Panc1 (cell line): ENCODE measurements at regions of chr6 and their contacts with region 1.

Region 1: DNA sequence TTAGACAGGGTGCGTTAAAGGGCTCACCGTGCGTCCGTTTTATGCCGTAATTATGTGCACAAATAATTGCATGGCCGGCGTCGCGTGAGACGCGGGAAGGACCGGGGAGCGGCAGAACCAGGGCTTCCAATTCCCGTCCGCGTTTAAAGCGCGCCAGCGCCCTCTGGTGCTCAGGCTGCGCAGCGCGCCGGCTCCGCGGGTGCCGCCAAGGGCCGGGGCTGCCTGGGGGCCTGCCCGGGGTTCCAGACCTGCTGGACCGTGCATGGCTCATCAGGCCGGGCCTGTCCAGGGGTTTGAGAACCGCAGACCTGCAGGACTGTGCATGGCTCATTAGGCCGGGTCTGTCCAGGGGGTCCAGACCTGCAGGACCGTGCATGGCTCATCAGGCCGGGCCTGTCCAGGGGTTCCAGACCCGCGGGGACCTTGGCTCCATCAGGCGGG is 369.0 kb downstream of the THBS2 start:
- DNase-seq: no peak
- ATAC-seq: peak; percentile 94
- H3K4me3 ChIP-seq: no peak overlapping the region
- H3K27ac ChIP-seq: no peak overlapping the region
- H3K4me1 ChIP-seq: no peaks in the 10 kb centered on the region
- H3K27me3 ChIP-seq: peaks cover 28% of the 10 kb centered on the region
- CTCF ChIP-seq: peak; percentile 99

Region 2: DNA sequence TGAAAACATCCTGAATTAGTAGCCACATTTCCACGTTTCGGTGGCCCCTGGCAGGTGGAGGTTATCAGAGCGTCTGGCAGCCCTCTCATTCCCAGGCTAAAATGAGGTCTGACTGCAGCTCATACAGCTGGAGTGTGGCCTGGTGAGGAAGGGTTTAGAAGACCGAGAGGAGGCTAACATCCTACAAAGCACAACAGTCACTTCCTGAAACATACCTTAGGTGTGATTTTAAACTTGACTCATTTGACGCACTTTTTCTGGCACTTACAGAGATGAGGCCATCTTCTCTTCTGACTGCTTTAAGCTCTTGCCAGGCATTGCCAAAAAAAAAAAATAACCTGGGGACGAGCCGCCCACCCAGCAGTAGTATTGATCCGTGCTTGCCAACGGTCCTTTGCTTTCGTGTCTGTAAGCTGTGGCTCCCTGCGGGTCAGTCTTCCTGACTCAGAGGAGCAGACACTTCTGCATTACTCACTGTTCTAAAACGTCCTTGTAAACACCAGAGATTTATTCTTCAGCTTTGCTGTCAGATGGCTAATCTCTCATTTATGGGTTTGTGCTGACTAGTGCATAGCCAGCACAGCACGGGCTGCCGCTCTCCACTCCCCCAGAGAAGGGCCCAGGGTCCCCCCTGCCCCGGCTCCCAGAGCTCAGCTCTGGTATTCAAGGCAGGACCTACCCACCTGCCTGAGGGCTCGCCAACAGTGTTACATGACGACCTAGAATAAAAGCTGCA is 727.2 kb before region 1 on chr6:
- CTCF ChIA-PET with region 1: no interaction called
- POLR2A ChIA-PET with region 1: no interaction called
- in situ Hi-C with region 1: no loop called
- intact Hi-C with region 1: loop called (anchors 10 kb)
- DNase-seq: peak; percentile 68
- ATAC-seq: peak; percentile 87
- H3K4me3 ChIP-seq: peak overlapping the region in 1 of 2 experiments; percentile 54; a peak in 2 of 4 replicates
- H3K27ac ChIP-seq: peak overlapping the region; percentile 85
- H3K4me1 ChIP-seq: peaks cover 33% of the 10 kb centered on the region
- H3K27me3 ChIP-seq: no peaks in the 10 kb centered on the region
- CTCF ChIP-seq: no peak

Region 3: GRCh38 chr6:168370310-168370991 is 514.2 kb before region 1 on chr6:
- CTCF ChIA-PET with region 1: no interaction called
- POLR2A ChIA-PET with region 1: no interaction called
- in situ Hi-C with region 1: no loop called
- intact Hi-C with region 1: loop called (anchors 1 kb)
- DNase-seq: peak; percentile 24
- ATAC-seq: peak; percentile 98
- H3K4me3 ChIP-seq: no peak overlapping the region
- H3K27ac ChIP-seq: no peak overlapping the region
- H3K4me1 ChIP-seq: peaks cover 6% of the 10 kb centered on the region; the same call in 1 of the 2 replicates
- H3K27me3 ChIP-seq: no peaks in the 10 kb centered on the region; the same call in 1 of the 2 replicates
- CTCF ChIP-seq: peak; percentile 99

Region 4: GRCh38 chr6:168451805-168452517 is 432.7 kb before region 1 on chr6:
- CTCF ChIA-PET with region 1: no interaction called
- POLR2A ChIA-PET with region 1: no interaction called
- in situ Hi-C with region 1: no loop called
- intact Hi-C with region 1: loop called (anchors 10 kb)
- DNase-seq: no peak
- ATAC-seq: no peak
- H3K4me3 ChIP-seq: no peak overlapping the region
- H3K27ac ChIP-seq: no peak overlapping the region
- H3K4me1 ChIP-seq: no peaks in the 10 kb centered on the region
- H3K27me3 ChIP-seq: peaks cover 34% of the 10 kb centered on the region
- CTCF ChIP-seq: peak; percentile 68; the same call in 1 of the 2 replicates

Region 5: DNA sequence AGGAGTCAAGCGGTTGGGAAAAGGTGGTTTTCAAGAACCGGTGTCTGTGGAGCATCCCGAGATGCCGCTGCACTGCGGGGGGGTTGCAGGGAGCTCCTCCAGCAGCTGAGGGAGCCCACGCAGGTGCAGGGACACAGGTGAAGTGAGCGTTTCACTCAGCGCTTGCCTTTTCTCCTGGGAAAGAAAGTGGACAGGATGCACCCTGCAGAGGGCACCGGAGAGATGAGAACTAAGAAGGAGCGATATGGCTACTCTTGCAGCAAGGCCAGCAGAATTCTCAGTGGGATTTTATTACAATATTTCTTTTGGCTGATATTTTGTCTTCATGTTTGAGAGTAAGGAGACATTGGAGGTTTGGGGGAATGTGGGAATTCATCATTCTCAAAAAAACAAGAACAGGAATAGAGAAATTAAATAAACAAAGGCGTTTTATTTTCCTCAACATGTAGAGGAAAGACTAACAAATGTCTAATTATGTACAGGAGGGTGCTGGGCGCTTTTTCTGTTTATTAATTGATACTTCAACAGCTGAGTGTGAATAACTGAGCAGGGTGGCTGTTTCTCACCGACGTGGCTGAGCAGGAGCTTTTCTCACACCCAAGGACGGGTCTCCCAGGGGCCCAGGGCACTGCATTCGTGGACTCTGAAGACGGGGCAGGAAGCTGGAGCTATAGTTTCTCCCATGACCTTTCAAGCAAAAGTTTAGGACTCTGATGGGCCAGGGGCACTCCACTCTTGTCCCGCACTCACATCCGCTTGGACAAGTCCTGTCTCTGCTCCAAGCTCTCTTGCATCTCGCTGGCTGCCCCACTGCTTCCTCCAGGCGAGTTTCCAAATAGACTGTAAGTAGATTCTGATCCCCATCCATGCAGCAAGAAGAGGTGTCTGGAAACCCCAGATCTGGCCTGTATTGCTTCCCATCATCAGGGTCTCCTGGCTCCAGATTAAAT is 267.6 kb before region 1 on chr6:
- CTCF ChIA-PET with region 1: no interaction called
- POLR2A ChIA-PET with region 1: no interaction called
- in situ Hi-C with region 1: no loop called
- intact Hi-C with region 1: loop called (anchors 10 kb)
- DNase-seq: no peak
- ATAC-seq: peak; percentile 73; the same call in 1 of the 2 replicates
- H3K4me3 ChIP-seq: no peak overlapping the region
- H3K27ac ChIP-seq: no peak overlapping the region
- H3K4me1 ChIP-seq: no peaks in the 10 kb centered on the region
- H3K27me3 ChIP-seq: no peaks in the 10 kb centered on the region
- CTCF ChIP-seq: no peak; the same call in 1 of the 2 replicates